ENCODE measurements at regions of chr9 and their contacts with region 1.

Region 1: DNA sequence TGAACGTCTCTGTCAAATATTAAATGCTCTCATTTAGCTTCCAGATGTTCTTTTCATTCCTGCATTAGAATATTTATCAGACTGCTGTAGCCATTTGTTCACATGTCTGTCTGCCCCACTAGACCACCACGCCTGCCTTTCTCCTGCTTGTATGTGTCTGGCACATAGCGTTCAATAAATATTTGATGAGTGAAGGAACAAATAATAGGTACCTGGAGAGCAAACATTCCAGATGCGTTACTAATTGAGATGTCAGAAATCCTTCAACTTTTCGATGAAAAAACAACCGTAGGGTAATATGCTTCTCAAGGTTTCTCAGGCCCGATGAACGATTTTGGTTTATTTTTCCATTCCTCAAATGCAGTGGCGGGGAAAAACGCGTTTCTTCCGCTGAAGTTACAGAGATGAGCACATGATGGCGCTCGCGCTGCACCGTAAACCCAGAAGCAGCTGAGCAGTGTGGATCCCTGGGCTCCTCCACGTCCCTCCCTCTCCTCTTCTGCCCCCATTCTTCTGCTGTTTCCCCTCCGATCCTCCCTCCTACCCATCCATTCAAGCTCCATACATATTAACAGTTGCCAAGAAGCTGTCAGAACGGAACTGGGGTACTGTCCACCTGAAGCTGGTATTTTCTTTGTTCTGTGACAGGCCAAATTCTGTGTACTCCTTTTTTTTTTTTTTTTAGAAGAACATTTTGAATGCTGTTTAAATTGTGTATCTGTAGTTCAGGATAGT is 245.4 kb downstream of the MPDZ start:
- DNase-seq: peak; percentile 48 to 55
- ATAC-seq: peak; percentile 82 to 91 (median 86)
- H3K4me3 ChIP-seq: peak overlapping the region in 8 of 10 donors; percentile 10 to 38 (median 35)
- H3K27ac ChIP-seq: no peak overlapping the region
- H3K4me1 ChIP-seq: peaks cover 0 to 9% (median 0%) of the 10 kb centered on the region in 9 donors
- H3K27me3 ChIP-seq: no peaks in the 10 kb centered on the region
- CTCF ChIP-seq: peak; percentile 59 to 81 (median 77)

Region 2: GRCh38 chr9:12846035-12846434 is 188.1 kb before region 1 on chr9:
- intact Hi-C with region 1: no loop called
- DNase-seq: no peak
- ATAC-seq: no peak
- H3K4me3 ChIP-seq: no peak overlapping the region
- H3K27ac ChIP-seq: no peak overlapping the region
- H3K4me1 ChIP-seq: no peaks in the 10 kb centered on the region
- H3K27me3 ChIP-seq: no peaks in the 10 kb centered on the region
- CTCF ChIP-seq: no peak

Region 3: GRCh38 chr9:12988253-12988652 is 45.9 kb before region 1 on chr9:
- intact Hi-C with region 1: no loop called
- DNase-seq: no peak
- ATAC-seq: no peak
- H3K4me3 ChIP-seq: no peak overlapping the region
- H3K27ac ChIP-seq: no peak overlapping the region
- H3K4me1 ChIP-seq: no peaks in the 10 kb centered on the region
- H3K27me3 ChIP-seq: no peaks in the 10 kb centered on the region
- CTCF ChIP-seq: peak in 1 of 9 donors; percentile 10

Region 4: GRCh38 chr9:13088720-13089427 is 54.7 kb after region 1 on chr9:
- intact Hi-C with region 1: loop called in 7 of 10 experiments (anchors 1 to 10 kb)
- DNase-seq: peak in 1 of 2 donors; percentile 13
- ATAC-seq: peak in 5 of 8 donors; percentile 51 to 73 (median 65)
- H3K4me3 ChIP-seq: peak overlapping the region in 1 of 10 donors; percentile 16
- H3K27ac ChIP-seq: no peak overlapping the region
- H3K4me1 ChIP-seq: peaks cover 0 to 7% (median 0%) of the 10 kb centered on the region in 9 donors
- H3K27me3 ChIP-seq: no peaks in the 10 kb centered on the region
- CTCF ChIP-seq: peak; percentile 59 to 84 (median 76)